ENCODE measurements at regions of chr7 and their contacts with region 1.

Region 1: GRCh38 chr7:75617634-75618234 is 121.0 kb downstream of the HIP1 start:
- DNase-seq: peak; percentile 97 to 99 (median 99)
- H3K4me3 ChIP-seq: peak overlapping the region in 4 of 7 experiments; percentile 5 to 57 (median 23)
- H3K27ac ChIP-seq: peak overlapping the region; percentile 82 to 84
- H3K4me1 ChIP-seq: peaks cover 5 to 86% (median 50%) of the 10 kb centered on the region in 4 experiments
- H3K27me3 ChIP-seq: no peaks in the 10 kb centered on the region

Region 2: DNA sequence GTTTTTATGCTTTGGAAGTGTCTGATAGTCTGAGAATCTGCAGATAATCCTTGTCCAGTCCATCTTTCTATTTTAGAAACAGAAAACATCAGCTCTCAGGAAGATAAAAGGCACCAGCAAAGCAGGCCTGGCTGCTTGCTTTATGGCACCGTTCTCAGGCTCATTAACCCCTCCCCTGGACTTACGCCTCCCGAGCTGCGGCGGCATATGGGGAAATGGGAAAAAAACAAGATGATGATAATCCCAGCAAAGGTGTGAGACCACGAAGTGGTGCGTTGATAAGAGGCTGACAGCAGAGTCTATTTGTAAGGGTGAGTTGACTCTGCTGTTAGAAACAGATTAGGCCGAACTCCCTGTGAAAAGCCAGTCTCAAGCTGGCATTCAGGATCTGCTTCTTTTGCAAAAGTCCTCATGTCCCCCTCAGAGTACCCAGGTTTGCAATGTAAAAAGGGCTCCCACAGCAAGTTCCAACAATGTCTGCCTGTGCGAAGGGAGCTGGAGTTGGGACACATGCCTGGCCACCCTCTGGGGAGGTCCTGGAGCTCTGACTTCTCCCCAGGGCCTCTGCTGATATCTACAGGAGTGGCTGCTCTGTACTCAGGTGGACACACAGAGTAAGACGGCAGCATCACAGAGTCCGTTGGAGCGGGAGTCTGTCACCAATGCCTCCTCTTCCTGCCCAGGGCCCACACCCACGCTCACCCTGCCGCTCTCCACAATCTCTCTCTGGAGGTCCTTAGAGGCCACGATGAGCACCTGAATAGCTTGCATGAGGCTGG is 71.3 kb before region 1 on chr7:
- CTCF ChIA-PET with region 1: no interaction called
- POLR2A ChIA-PET with region 1: no interaction called
- DNase-seq: no peak
- H3K4me3 ChIP-seq: no peak overlapping the region
- H3K27ac ChIP-seq: no peak overlapping the region
- H3K4me1 ChIP-seq: no peaks in the 10 kb centered on the region
- H3K27me3 ChIP-seq: no peaks in the 10 kb centered on the region

Region 3: DNA sequence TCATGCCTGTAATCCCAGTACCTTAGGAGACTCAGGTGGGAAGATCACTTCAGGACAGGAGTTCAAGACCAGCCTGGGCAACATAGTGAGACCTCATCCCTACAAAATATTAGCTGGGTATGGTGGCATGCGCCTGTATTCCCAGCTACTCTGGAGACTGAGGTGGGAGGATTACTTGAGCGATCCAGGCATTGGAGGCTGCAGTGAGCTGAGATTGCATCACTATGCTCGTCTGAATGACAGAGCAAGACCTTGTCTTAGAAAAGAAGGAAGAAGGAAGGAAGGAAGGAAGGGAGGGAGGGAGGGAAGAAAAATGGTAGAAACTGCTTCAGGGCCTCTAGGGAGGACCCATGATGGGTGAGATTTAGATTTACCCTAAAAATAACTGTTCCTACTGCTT is 13.3 kb before region 1 on chr7:
- CTCF ChIA-PET with region 1: interaction called, 14 read pairs
- POLR2A ChIA-PET with region 1: no interaction called
- DNase-seq: no peak
- H3K4me3 ChIP-seq: no peak overlapping the region
- H3K27ac ChIP-seq: no peak overlapping the region
- H3K4me1 ChIP-seq: peaks cover 0 to 21% (median 0%) of the 10 kb centered on the region in 4 experiments
- H3K27me3 ChIP-seq: no peaks in the 10 kb centered on the region

Region 4: GRCh38 chr7:75635036-75635435 is 17.3 kb after region 1 on chr7:
- CTCF ChIA-PET with region 1: interaction called, 7 read pairs
- POLR2A ChIA-PET with region 1: interaction called, 10 read pairs
- DNase-seq: no peak
- H3K4me3 ChIP-seq: no peak overlapping the region
- H3K27ac ChIP-seq: no peak overlapping the region
- H3K4me1 ChIP-seq: peaks cover 6 to 50% (median 21%) of the 10 kb centered on the region in 4 experiments
- H3K27me3 ChIP-seq: no peaks in the 10 kb centered on the region